Mammary epithelial cell (primary cell): ENCODE measurements at regions of chr22 and their contacts with region 1.

Region 1: DNA sequence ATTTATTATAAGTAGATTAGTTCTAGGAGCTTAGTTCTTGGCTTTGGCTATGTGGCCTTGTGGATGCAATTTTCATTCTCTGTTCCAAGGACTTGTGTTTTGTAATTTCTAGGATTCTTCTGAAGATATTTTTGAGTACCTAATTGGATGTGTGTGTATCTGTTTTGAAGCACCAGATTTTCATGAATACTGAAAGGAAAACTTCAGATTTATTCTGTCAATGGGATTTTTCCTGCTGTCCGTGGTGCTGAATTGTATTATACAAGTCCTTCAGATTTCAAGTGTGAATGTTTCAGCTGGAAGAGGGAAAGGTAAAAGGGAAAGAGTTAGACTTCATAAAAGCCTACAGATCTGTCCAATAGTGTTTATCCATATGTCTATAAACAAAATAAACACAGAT is 18.2 kb upstream of the SYN3 start:
- DNase-seq: peak; percentile 19
- H3K4me3 ChIP-seq: no peak overlapping the region
- H3K27ac ChIP-seq: no peak overlapping the region
- H3K4me1 ChIP-seq: peaks cover 7% of the 10 kb centered on the region
- H3K27me3 ChIP-seq: no peaks in the 10 kb centered on the region
- CTCF ChIP-seq: no peak

Region 2: GRCh38 chr22:33044112-33044511 is 32.2 kb before region 1 on chr22:
- CTCF ChIA-PET with region 1: no interaction called
- dilution Hi-C with region 1: loop called (anchors 5 kb)
- in situ Hi-C with region 1: no loop called
- intact Hi-C with region 1: no loop called
- DNase-seq: no peak
- H3K4me3 ChIP-seq: no peak overlapping the region
- H3K27ac ChIP-seq: no peak overlapping the region
- H3K4me1 ChIP-seq: no peaks in the 10 kb centered on the region
- H3K27me3 ChIP-seq: peaks cover 2% of the 10 kb centered on the region
- CTCF ChIP-seq: no peak

Region 3: DNA sequence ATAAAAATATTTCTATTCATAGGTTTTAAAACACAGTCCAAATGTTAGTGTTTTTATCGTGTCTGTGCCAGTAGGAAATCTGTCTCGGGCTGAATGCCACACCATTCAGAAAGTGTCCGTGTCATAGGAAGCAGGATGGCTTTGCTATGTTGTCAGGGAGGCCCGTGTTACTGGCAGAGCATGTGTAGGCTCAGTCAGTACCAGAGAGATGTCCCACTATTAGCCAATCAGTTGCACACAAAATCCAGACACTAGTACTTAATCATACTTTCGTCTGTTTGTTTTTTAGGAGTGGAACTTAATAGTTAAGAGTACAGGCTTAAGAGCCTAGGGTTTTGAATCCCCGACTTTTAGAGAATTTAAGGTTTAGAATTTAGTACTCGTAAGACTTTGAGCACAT is 12.1 kb after region 1 on chr22:
- CTCF ChIA-PET with region 1: no interaction called
- dilution Hi-C with region 1: no loop called
- in situ Hi-C with region 1: no loop called
- intact Hi-C with region 1: no loop called
- DNase-seq: no peak
- H3K4me3 ChIP-seq: no peak overlapping the region
- H3K27ac ChIP-seq: no peak overlapping the region
- H3K4me1 ChIP-seq: no peaks in the 10 kb centered on the region
- H3K27me3 ChIP-seq: no peaks in the 10 kb centered on the region
- CTCF ChIP-seq: no peak

Region 4: DNA sequence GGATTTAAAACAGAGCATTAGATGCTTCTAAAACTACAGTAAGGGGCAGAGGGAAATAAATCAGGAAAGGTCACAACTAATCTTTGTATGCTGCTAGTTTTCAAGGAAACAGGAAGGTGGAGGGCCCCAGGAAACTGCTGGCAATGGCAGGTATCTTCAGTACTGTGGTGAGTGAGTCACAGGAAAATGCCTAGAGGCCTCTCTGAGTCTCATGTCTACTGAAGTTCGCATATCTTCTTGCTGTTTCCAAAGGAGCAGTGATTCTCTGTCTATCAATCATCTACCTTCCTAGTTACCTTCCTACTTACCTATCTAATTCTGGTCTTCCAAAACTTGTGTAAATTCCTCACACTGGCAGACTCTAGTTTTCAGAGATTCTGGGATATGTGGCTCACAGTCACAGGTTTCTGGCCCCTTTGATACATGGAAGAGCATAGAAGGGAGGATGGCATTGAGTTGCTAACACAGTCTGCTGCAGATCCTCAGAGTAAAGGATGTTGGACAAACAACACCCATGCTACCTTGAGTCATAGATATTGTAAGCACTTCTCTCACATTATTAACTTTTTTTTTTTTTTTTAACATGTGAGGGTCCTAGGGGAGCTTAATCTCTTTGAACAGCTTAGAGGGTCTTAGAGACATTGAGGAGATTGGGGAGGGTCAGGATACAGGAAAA is 40.7 kb after region 1 on chr22:
- CTCF ChIA-PET with region 1: no interaction called
- dilution Hi-C with region 1: no loop called
- in situ Hi-C with region 1: no loop called
- intact Hi-C with region 1: loop called (anchors 5 kb)
- DNase-seq: peak; percentile 82
- H3K4me3 ChIP-seq: no peak overlapping the region
- H3K27ac ChIP-seq: no peak overlapping the region
- H3K4me1 ChIP-seq: peaks cover 16% of the 10 kb centered on the region
- H3K27me3 ChIP-seq: no peaks in the 10 kb centered on the region
- CTCF ChIP-seq: no peak